AG04450 (cell line): ENCODE measurements at regions of chr9 and their contacts with region 1.

Region 1: DNA sequence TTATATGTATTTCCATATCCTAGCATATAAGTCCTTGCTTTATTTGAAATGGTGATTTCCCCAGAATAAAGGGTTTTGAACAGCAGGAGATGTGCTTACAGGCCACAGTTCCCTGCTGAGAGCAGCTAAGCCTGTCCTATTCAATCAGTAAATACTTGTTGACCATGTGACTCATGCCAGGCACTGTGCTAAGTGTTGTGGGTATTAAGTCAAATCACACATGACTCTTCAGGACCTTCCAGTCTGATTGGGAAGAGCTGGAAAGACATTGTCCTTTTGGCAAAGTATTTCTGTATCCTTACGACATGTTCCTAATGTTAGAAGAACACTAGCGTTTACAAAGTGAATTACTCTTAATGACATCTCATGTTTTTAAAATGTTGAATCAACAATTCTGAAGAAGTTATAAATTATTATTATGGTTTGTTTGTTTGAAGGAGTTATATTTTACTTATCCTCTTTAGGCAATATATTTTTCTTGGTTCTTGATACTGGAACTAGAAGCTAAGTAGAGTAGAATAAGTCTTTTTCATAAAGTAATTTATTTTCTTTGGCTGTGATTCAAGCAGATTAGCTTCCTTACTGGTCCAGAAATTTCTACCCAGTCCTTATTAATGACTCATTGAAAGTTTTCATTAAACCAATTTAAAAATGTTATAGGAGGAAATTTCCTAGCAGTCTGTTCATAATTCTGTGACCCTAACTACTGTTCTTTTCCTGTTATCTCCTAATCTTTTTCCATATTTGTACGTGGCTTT is 82.1 kb downstream of the GAPVD1 start:
- DNase-seq: peak; percentile 10
- H3K4me3 ChIP-seq: no peak overlapping the region
- H3K27ac ChIP-seq: no peak overlapping the region
- H3K27me3 ChIP-seq: no peaks in the 10 kb centered on the region
- CTCF ChIP-seq: no peak

Region 2: GRCh38 chr9:125380396-125380795 is 36.7 kb after region 1 on chr9:
- CTCF ChIA-PET with region 1: interaction called, 10 read pairs
- POLR2A ChIA-PET with region 1: no interaction called
- DNase-seq: no peak
- H3K4me3 ChIP-seq: no peak overlapping the region
- H3K27ac ChIP-seq: no peak overlapping the region
- H3K27me3 ChIP-seq: peaks cover 14% of the 10 kb centered on the region
- CTCF ChIP-seq: no peak